ENCODE measurements at regions of chr3 and their contacts with region 1.

Region 1: GRCh38 chr3:129824926-129825541 is 68.5 kb downstream of the TMCC1 start:
- DNase-seq: no peak
- ATAC-seq: peak; percentile 52

Region 2: GRCh38 chr3:129490242-129491045 is 334.6 kb before region 1 on chr3:
- intact Hi-C with region 1: loop called (anchors 5 kb)
- DNase-seq: peak; percentile 85
- ATAC-seq: peak; percentile 91

Region 3: DNA sequence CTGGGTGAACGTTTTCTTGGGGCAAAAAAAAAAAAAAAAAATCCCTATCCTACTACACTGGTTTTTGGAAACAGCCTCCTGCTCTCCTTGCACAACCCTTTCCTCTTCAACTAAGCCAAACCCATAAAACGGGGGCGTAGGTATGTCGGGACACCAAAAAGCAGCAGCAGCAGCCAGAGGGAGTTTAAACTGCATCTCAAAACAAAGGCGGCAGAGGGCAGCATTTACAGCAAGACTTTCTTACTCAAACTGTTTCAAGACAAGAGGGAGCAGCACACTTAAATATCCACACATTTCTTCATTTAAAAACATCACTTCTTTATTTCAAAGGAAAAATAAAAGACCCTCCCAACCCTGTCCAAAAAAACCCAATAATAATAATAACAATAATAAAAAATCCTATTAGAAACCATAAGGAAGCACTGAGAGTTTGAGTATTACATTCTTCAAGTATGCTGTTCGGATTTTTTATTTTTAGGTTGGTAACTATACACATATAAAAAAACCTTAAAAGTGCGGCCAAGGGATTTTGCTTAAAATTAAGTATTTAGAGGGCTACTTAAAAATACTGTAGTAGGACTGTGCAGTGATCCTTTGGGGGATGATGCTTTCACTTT is 174.7 kb before region 1 on chr3:
- intact Hi-C with region 1: loop called (anchors 5 kb)
- DNase-seq: peak; percentile 47
- ATAC-seq: peak; percentile 74

Region 4: GRCh38 chr3:130048726-130049125 is 223.7 kb after region 1 on chr3:
- intact Hi-C with region 1: no loop called
- DNase-seq: no peak
- ATAC-seq: no peak